ENCODE measurements at regions of chr20 and their contacts with region 1.

Region 1: DNA sequence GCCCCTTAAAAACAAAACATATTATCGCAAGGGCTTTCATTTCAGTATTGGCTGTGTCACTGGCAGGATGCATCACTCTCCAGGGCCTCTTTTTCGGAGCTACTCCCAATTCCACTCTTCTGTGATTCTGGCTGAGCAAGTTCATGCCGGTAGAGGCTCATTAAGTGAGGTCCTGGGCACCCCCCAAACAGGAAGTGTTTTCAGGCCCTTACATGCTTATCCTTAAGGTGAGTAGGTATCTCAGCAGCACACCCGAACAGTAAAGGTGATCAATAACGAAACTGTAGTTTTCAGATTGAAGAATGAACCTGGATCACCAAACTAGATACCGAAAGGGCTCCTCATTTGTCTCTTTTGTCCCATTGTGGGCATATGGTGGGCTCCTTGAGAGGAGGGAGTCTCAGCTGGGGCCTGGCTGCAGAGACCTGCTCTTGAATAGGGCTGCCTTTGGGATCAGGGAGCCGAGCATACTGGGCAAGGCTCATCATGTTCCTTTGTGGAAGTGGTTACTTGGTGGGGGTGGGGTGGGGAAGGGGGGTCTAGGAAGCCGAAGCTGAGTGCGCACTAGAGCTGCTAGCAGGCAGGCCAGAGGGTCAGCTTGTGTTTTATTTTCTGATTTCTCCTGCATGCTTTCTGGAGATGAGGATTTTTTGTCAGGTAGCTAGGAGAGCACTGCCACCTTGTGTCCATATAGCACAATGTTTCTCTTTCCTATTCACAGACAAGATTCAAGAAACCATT is 65.2 kb downstream of the CDS2 start:
- DNase-seq: no peak
- H3K4me3 ChIP-seq: no peak overlapping the region
- H3K27ac ChIP-seq: peak overlapping the region; percentile 56 to 59
- H3K4me1 ChIP-seq: peaks cover 0 to 12% (median 7%) of the 10 kb centered on the region in 4 donors
- H3K27me3 ChIP-seq: no peaks in the 10 kb centered on the region
- CTCF ChIP-seq: peak; percentile 71 to 84

Region 2: GRCh38 chr20:5126512-5127203 is 65.3 kb before region 1 on chr20 and contains the start of gene CDS2:
- intact Hi-C with region 1: loop called (anchors 1 kb)
- DNase-seq: peak; percentile 99 to 100
- H3K4me3 ChIP-seq: peak within 1 kb of the TSS; percentile 91 to 100
- H3K27ac ChIP-seq: peak within 1 kb of the TSS; percentile 100
- H3K4me1 ChIP-seq: peaks cover 0 to 44% (median 30%) of the 10 kb centered on the region in 4 donors
- H3K27me3 ChIP-seq: no peaks in the 10 kb centered on the region
- CTCF ChIP-seq: peak; percentile 64 to 67